ENCODE measurements at regions of chr2 and their contacts with region 1.

Region 1: DNA sequence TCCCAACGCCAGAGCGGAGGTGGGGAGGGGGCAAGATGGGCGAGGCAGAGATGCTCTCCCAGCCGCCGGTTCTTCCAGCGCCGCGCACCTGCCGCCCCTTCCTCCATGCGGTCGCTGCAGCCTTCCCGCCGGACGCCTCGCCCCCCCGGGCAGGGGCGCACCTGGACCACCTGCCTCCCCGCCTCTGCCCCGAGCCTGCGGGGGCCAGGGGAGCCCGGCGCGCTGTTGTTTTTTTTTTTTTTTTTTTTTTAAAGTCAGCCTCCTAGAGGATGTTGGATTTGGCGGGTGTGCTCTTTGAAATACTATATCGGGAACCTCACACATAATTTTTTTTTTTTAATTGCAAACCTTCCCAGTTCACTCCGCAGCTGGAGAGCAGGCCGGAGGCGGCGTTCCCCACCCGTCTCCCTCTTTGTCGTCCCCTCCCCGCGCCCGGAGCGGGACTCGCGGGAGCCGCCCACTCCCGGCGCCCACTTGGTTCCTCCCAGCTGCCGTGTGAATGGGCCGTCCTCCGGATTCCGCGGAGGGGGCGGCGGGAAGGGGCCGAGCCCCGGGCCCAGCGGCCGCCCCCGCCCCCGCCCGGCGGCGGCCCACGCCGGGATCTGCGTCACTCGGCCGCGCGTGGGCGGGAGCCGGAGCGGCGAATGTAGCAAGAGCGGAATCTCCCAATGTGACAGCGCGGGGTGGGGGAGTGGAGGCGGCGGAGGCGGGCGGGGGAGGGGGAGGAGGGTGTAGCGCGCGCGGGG is 421 bp upstream of the NAB1 start:
- DNase-seq: peak; percentile 85
- H3K4me3 Mint-ChIP-seq: peak overlapping the region; percentile 75
- H3K27ac Mint-ChIP-seq: peak overlapping the region; percentile 82
- H3K4me1 Mint-ChIP-seq: peaks cover 38% of the 10 kb centered on the region
- H3K27me3 Mint-ChIP-seq: no peaks in the 10 kb centered on the region

Region 2: GRCh38 chr2:190607014-190607597 is 41.4 kb before region 1 on chr2:
- CTCF ChIA-PET with region 1: no interaction called
- POLR2A ChIA-PET with region 1: no interaction called
- intact Hi-C with region 1: no loop called
- DNase-seq: no peak
- H3K4me3 Mint-ChIP-seq: no peak overlapping the region
- H3K27ac Mint-ChIP-seq: no peak overlapping the region
- H3K4me1 Mint-ChIP-seq: no peaks in the 10 kb centered on the region
- H3K27me3 Mint-ChIP-seq: peaks cover 2% of the 10 kb centered on the region

Region 3: DNA sequence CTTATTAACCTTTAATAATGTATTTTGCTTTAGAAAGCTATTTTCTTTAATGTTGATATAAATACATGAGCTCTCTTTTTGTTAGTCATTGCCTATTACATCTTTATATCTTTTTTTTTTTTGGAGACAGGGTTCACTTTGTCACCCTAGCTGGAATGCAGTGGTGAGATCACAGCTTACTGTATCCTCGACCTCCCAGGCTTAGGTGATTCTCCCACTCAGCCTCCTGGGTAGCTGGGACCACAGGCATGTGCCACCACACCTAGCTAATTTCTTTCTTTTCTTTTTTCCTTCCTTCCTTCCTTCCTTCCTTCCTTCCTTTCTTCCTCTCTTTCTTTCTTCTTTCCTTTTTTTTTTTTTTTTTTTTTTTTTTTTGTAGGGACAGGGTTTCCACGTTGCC is 15.8 kb after region 1 on chr2:
- CTCF ChIA-PET with region 1: interaction called, 5 read pairs
- POLR2A ChIA-PET with region 1: interaction called, 14 read pairs
- intact Hi-C with region 1: loop called (anchors 1 kb)
- DNase-seq: no peak
- H3K4me3 Mint-ChIP-seq: no peak overlapping the region
- H3K27ac Mint-ChIP-seq: no peak overlapping the region
- H3K4me1 Mint-ChIP-seq: peaks cover 53% of the 10 kb centered on the region
- H3K27me3 Mint-ChIP-seq: no peaks in the 10 kb centered on the region

Region 4: DNA sequence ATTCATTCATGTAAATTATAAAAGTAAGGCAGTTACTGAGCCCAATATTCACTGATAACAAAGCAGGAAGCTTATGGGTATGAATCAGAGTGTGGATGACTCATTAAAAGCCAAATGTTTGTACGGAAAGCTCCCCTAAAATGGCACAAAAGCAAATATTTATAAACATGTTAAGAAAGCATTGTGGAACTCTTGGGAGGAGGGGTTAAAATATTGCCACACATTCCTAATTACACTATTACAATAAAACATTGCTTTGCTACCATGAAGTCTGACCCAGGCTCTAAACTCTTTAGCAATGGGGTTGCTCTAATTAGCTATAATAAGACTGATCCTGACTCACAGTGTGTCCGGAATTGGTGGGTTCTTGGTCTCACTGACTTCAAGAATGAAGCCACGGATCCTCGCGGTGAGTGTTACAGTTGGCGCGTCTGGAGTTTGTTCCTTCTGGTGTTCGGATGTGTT is 111.3 kb after region 1 on chr2:
- CTCF ChIA-PET with region 1: interaction called, 3 read pairs
- POLR2A ChIA-PET with region 1: no interaction called
- intact Hi-C with region 1: loop called (anchors 5 kb)
- DNase-seq: no peak
- H3K4me3 Mint-ChIP-seq: peak overlapping the region; percentile 51
- H3K27ac Mint-ChIP-seq: peak overlapping the region; percentile 18
- H3K4me1 Mint-ChIP-seq: peaks cover 32% of the 10 kb centered on the region
- H3K27me3 Mint-ChIP-seq: no peaks in the 10 kb centered on the region

Measured in activated CD4-positive, alpha-beta memory T cell treated with anti-CD3 and anti-CD28 coated beads for 36 hours (primary cell).